ENCODE measurements at regions of chr18 and their contacts with region 1.

Region 1: DNA sequence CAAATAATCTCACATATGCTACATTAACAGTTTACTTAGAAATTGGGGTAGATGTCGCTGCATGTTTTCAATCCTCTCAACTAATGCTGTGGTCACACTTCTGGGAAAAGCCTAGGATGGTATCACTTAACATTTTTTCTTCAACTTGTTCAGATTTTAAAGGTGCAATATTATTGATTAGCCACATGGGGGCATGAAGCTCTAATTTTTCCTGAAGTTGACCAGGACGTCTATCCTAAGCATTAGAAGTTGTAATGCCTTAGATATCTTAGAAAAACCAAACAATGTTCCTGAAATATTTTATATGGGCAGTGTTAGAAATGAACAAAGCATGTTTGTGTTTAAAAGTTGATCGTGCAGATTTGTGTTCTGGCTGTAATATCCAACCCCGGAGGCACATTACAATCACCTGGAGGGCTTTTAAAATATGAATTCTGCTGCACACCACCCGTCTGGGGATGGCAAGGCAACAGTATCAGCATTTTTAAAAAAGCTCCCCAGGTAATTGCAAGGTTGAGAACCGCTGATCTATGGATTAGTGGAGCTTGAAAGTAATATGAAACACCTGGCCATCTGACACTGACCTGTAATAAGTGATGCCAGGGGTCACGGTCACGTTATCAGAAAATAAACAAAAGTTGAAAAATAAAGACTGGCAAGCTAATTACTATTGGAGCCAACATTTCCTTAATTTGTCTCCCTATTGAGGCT is 100.5 kb upstream of the LMAN1 start:
- DNase-seq: no peak
- ATAC-seq: no peak
- H3K4me3 Mint-ChIP-seq: no peak overlapping the region
- H3K27ac Mint-ChIP-seq: no peak overlapping the region
- H3K4me1 Mint-ChIP-seq: peaks cover 2% of the 10 kb centered on the region
- H3K27me3 Mint-ChIP-seq: peaks cover 13% of the 10 kb centered on the region

Region 2: GRCh38 chr18:59432803-59433597 is 26.5 kb before region 1 on chr18:
- CTCF ChIA-PET with region 1: no interaction called
- DNase-seq: no peak
- ATAC-seq: no peak
- H3K4me3 Mint-ChIP-seq: no peak overlapping the region
- H3K27ac Mint-ChIP-seq: no peak overlapping the region
- H3K4me1 Mint-ChIP-seq: no peaks in the 10 kb centered on the region
- H3K27me3 Mint-ChIP-seq: peaks cover 20% of the 10 kb centered on the region

Region 3: DNA sequence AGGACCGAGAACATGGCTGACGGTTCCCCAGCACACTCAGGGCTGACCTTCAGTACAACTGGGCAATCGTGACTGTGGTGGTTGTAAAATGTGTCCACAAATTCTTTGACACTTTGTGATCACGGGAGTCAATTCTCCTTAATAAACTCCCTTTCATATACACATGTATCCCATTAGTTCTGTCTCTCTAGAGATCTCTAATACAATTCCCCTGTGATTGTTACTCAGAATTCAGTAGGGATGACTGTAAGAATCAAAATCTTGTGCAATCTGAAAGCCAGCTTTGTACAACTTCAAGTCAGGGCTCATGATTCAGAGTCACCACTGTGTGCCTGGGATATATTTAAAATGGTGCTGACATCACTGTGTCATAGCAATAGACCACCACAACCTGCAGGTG is 11.0 kb before region 1 on chr18:
- CTCF ChIA-PET with region 1: interaction called, 11 read pairs
- DNase-seq: no peak
- ATAC-seq: no peak
- H3K4me3 Mint-ChIP-seq: no peak overlapping the region
- H3K27ac Mint-ChIP-seq: no peak overlapping the region
- H3K4me1 Mint-ChIP-seq: no peaks in the 10 kb centered on the region
- H3K27me3 Mint-ChIP-seq: peaks cover 2% of the 10 kb centered on the region

Measured in activated CD8-positive, alpha-beta memory T cell treated with anti-CD3 and anti-CD28 coated beads, Interleukin-2, amount 10 ng/mL, durations not matched to agents 7 days and 5 days (primary cell).